Ascending aorta (tissue), 2 donors: ENCODE measurements at regions of chr16 and their contacts with region 1.

Region 1: DNA sequence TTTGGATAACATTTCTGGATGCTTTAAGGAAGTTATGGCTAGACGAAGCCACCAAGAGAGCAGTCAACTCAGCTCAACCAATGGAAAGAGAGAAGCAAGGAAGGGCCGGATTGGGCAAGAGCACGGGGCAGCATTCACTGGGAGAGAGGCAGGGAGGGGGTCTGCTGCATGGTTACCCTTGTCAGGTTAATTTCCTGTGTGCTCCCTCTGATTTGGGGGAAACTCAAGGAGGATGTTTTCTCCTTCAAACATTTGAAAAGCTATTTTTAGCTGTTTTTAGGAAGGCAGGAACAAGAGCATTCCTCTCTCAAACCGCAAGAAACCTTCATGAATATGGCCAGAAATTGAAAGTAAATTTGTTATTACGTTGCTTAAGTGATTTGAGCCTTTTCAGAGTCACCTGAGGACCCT is 118.5 kb upstream of the ZFHX3 start:
- DNase-seq: no peak
- H3K4me3 ChIP-seq: peak overlapping the region; percentile 43 to 48
- H3K27ac ChIP-seq: peak overlapping the region; percentile 78 to 86
- H3K4me1 ChIP-seq: peaks cover 0 to 5% of the 10 kb centered on the region in 2 donors
- H3K27me3 ChIP-seq: no peaks in the 10 kb centered on the region
- CTCF ChIP-seq: no peak

Region 2: DNA sequence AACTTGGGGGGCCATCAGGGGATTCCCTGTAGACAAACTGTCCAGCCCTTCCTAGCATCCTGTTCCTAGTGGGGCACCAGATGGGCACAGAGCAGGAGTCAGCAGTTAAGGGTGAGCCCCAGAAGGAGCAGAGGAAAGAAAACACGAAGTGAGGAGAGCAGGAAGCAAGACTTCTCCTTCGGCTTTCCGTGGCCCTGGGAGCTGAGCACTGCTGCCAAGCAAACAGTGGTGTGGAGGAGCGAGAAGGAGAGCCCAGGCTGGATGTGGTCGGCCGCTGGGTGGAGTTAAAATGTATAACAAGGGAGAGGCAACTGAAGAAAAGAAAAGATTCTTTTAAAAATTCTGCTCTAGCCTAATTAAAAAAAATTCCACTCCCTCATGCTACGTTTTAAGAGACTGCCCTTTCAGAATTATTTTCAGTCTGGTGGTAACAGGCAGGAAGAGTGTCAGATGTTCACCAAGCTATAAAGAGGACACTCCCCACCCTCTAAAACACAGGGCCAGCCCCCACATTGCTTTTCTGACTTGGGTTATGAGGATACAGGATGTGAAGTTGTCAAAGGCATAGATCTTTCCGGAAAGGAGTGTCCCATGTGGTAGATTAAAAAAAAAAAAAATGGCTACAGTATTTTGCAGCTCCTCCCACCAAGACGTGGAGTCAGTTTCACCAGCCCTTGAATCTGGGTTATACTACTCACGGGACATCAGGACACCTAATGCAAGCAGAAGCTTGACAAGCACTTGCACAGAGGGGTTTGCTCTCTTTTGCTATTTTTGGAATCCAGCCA is 43.6 kb before region 1 on chr16:
- intact Hi-C with region 1: no loop called
- DNase-seq: no peak
- H3K4me3 ChIP-seq: peak overlapping the region; percentile 3 to 52
- H3K27ac ChIP-seq: peak overlapping the region; percentile 76 to 81
- H3K4me1 ChIP-seq: peaks cover 5 to 11% of the 10 kb centered on the region in 2 donors
- H3K27me3 ChIP-seq: no peaks in the 10 kb centered on the region
- CTCF ChIP-seq: peak in 1 of 3 experiments; percentile 9

Region 3: GRCh38 chr16:73143576-73144422 is 22.6 kb before region 1 on chr16:
- intact Hi-C with region 1: loop called (anchors 2 kb)
- DNase-seq: no peak
- H3K4me3 ChIP-seq: peak overlapping the region; percentile 47 to 68
- H3K27ac ChIP-seq: peak overlapping the region; percentile 80 to 89
- H3K4me1 ChIP-seq: peaks cover 0 to 11% of the 10 kb centered on the region in 2 donors
- H3K27me3 ChIP-seq: no peaks in the 10 kb centered on the region
- CTCF ChIP-seq: no peak

Region 4: GRCh38 chr16:73347500-73348375 is 181.3 kb after region 1 on chr16:
- intact Hi-C with region 1: no loop called
- DNase-seq: no peak
- H3K4me3 ChIP-seq: no peak overlapping the region
- H3K27ac ChIP-seq: no peak overlapping the region
- H3K4me1 ChIP-seq: no peaks in the 10 kb centered on the region
- H3K27me3 ChIP-seq: no peaks in the 10 kb centered on the region
- CTCF ChIP-seq: no peak